ENCODE measurements at regions of chr4 and their contacts with region 1.

Region 1: DNA sequence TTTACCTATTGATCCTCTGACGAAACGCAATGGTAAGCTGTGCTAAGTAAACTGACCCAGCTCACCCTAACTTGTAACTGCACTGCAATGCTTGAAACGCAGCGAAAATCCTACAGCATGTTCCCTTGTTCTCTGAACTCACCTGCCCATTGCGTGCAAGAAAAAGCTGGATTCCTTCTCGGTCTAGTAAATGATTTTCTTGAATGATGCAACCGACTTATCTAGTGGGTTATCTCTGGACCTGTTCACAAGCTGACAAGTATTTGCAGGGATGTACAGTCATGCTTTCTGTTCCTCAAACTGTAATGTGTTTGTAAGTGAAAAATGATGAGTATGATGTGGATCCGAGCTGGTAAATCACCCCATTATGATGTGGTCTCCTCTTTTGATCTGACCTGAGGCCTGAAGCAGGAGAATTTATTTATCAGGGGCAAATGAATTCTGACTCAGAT is 140.1 kb downstream of the BTC start:
- DNase-seq: peak; percentile 93 to 95
- H3K4me3 ChIP-seq: no peak overlapping the region
- H3K4me3 Mint-ChIP-seq: peak overlapping the region; percentile 60
- H3K27ac Mint-ChIP-seq: peak overlapping the region; percentile 87
- H3K4me1 ChIP-seq: peaks cover 81% of the 10 kb centered on the region
- H3K4me1 Mint-ChIP-seq: peaks cover 59% of the 10 kb centered on the region
- H3K27me3 ChIP-seq: no peaks in the 10 kb centered on the region
- H3K27me3 Mint-ChIP-seq: no peaks in the 10 kb centered on the region
- CTCF ChIP-seq: no peak

Region 2: DNA sequence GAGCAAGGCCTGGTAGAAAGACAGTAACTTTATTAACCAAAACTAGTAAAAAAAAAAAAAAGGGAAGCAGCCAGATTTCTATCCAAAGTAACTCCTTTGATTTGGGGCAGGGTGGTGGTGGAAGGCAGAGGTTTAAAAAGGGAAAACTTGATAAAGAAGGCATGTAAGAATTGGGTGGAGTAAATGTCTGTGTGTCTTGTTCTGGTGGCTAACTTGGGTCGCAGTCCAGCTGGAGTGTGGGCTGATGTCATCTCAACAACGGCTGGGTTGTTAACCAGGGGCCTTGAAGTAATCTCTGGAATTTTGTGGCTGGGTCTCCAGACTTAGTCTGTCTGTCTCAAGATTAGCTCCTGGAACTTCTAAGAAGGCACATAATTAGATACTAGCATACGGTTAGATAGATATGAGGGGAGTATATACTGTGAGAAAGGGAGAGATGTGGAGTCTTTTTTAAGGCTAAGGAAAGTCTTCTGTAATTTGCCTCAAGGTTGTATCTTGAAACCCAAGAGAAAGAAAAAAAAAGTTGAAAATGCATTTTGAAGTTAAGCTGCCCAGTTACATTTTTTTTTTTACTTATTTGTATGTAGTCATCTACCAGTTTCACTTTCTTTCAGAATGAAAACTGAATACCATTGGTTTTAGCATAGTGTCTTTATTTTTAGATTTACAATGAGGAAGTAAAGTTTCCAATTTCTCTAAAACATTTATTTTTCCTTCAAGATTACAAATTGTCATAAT is 448.0 kb before region 1 on chr4:
- CTCF ChIA-PET with region 1: no interaction called
- POLR2A ChIA-PET with region 1: no interaction called
- intact Hi-C with region 1: loop called (anchors 2 kb)
- DNase-seq: peak; percentile 33 to 51
- H3K4me3 ChIP-seq: no peak overlapping the region
- H3K4me3 Mint-ChIP-seq: peak overlapping the region; percentile 51
- H3K27ac Mint-ChIP-seq: peak overlapping the region; percentile 76
- H3K4me1 ChIP-seq: peaks cover 63% of the 10 kb centered on the region
- H3K4me1 Mint-ChIP-seq: peaks cover 46% of the 10 kb centered on the region
- H3K27me3 ChIP-seq: no peaks in the 10 kb centered on the region
- H3K27me3 Mint-ChIP-seq: no peaks in the 10 kb centered on the region
- CTCF ChIP-seq: no peak

Region 3: GRCh38 chr4:74608151-74608949 is 45.9 kb before region 1 on chr4:
- CTCF ChIA-PET with region 1: no interaction called
- POLR2A ChIA-PET with region 1: no interaction called
- intact Hi-C with region 1: loop called (anchors 1 kb)
- DNase-seq: peak; percentile 46 to 51
- H3K4me3 ChIP-seq: no peak overlapping the region
- H3K4me3 Mint-ChIP-seq: peak overlapping the region; percentile 48
- H3K27ac Mint-ChIP-seq: peak overlapping the region; percentile 9
- H3K4me1 ChIP-seq: peaks cover 56% of the 10 kb centered on the region
- H3K4me1 Mint-ChIP-seq: peaks cover 42% of the 10 kb centered on the region
- H3K27me3 ChIP-seq: no peaks in the 10 kb centered on the region
- H3K27me3 Mint-ChIP-seq: no peaks in the 10 kb centered on the region
- CTCF ChIP-seq: no peak

Region 4: DNA sequence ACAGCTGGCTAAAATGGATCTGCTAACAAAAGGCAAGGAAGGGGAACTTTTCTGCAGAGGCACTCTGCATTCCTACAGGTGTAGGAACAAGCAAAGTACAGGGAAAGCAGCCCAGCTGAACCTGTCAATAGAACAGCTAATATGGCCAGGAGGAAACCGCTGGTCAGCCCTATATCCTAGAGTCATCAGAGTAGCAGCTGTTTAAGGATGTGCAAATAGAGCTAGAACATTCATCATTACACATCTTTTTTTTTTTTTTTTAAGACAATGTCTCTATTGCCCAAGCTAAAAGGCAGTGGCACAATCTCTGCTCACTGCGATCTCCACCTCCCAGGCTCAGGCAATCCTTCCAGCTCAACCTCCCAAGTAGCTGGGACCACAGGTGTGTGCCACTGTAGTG is 22.9 kb before region 1 on chr4:
- CTCF ChIA-PET with region 1: no interaction called
- POLR2A ChIA-PET with region 1: interaction called, 3 read pairs
- intact Hi-C with region 1: loop called (anchors 1 kb)
- DNase-seq: peak; percentile 37 to 41
- H3K4me3 ChIP-seq: no peak overlapping the region
- H3K4me3 Mint-ChIP-seq: peak overlapping the region; percentile 2
- H3K27ac Mint-ChIP-seq: peak overlapping the region; percentile 39
- H3K4me1 ChIP-seq: peaks cover 72% of the 10 kb centered on the region
- H3K4me1 Mint-ChIP-seq: peaks cover 39% of the 10 kb centered on the region
- H3K27me3 ChIP-seq: no peaks in the 10 kb centered on the region
- H3K27me3 Mint-ChIP-seq: no peaks in the 10 kb centered on the region
- CTCF ChIP-seq: no peak

Region 5: GRCh38 chr4:74667944-74668343 is 13.7 kb after region 1 on chr4:
- CTCF ChIA-PET with region 1: interaction called, 10 read pairs
- POLR2A ChIA-PET with region 1: interaction called, 11 read pairs
- intact Hi-C with region 1: loop called (anchors 1 kb)
- DNase-seq: peak in 1 of 2 experiments; percentile 57
- H3K4me3 ChIP-seq: no peak overlapping the region
- H3K4me3 Mint-ChIP-seq: peak overlapping the region; percentile 2
- H3K27ac Mint-ChIP-seq: peak overlapping the region; percentile 67
- H3K4me1 ChIP-seq: peaks cover 75% of the 10 kb centered on the region
- H3K4me1 Mint-ChIP-seq: peaks cover 78% of the 10 kb centered on the region
- H3K27me3 ChIP-seq: no peaks in the 10 kb centered on the region
- H3K27me3 Mint-ChIP-seq: no peaks in the 10 kb centered on the region
- CTCF ChIP-seq: no peak